ENCODE measurements at regions of chr5 and their contacts with region 1.

Region 1: DNA sequence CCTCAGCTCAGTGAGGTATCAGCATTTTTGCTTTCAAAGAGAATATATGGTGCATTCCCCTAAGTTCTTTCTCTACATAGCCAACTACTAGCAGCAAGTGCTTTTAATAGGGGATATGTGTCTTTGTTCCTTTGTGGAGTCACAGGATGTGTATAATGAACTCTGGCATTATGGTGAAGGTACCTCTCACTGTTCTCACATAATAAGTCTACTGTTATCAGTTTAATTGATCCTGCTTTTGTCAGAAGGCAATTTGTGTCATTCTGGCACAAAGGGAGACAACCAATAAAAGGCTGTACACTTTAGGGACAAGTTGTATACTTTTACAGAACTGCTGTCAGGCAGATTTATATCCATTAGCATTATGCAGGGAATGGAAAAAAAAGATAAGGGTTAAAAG is 531.4 kb upstream of the RIOK2 start:
- DNase-seq: no peak
- H3K4me3 ChIP-seq: no peak overlapping the region
- H3K27ac ChIP-seq: no peak overlapping the region
- H3K4me1 ChIP-seq: no peaks in the 10 kb centered on the region
- H3K27me3 ChIP-seq: no peaks in the 10 kb centered on the region
- CTCF ChIP-seq: no peak
- POLR2A ChIP-seq: no peak

Region 2: GRCh38 chr5:97412959-97413358 is 301.5 kb before region 1 on chr5:
- intact Hi-C with region 1: no loop called
- DNase-seq: no peak
- H3K4me3 ChIP-seq: no peak overlapping the region
- H3K27ac ChIP-seq: no peak overlapping the region
- H3K4me1 ChIP-seq: no peaks in the 10 kb centered on the region
- H3K27me3 ChIP-seq: no peaks in the 10 kb centered on the region
- CTCF ChIP-seq: no peak
- POLR2A ChIP-seq: no peak

Region 3: DNA sequence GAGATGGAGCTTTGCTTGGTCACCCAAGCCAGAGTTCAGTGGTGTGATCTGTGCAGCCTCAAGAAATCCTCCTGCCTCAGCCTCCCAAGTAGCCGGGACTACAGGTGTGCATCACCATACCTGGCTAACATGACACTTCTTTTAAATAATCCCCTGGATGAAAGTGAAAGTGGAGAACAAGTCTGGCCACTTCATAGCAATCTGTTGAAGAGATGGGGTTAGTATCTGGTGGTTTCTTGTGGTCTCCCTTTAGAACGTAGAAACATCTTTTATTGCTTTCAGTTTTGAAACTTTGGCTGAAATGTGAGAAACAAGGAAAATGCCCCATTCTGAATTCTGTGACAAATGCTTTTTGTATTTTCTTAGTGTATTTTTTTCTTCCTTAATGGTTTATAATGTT is 78.9 kb before region 1 on chr5:
- intact Hi-C with region 1: no loop called
- DNase-seq: no peak
- H3K4me3 ChIP-seq: no peak overlapping the region
- H3K27ac ChIP-seq: no peak overlapping the region
- H3K4me1 ChIP-seq: no peaks in the 10 kb centered on the region
- H3K27me3 ChIP-seq: no peaks in the 10 kb centered on the region
- CTCF ChIP-seq: no peak
- POLR2A ChIP-seq: no peak

Region 4: DNA sequence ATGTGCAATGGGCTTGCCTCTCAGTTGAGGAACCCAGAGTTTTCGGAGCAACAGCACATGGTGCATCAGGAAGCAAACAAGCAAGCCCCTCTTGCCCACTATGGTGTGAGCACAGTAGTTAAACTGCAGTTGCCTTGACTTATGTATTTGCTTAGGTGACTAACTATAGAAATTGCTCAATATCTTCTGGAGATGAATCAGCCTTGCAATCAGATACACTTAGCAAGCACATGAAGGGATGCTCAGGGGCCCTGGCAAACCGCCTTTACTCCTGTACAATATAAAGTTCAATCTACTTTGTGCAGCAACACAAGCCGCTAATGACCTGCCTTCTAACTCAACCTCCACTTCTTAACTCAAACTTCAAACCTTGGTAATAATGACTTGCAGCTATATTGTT is 50.3 kb after region 1 on chr5:
- intact Hi-C with region 1: loop called in 1 of 2 experiments (anchors 2 kb)
- DNase-seq: no peak
- H3K4me3 ChIP-seq: no peak overlapping the region
- H3K27ac ChIP-seq: no peak overlapping the region
- H3K4me1 ChIP-seq: no peaks in the 10 kb centered on the region
- H3K27me3 ChIP-seq: no peaks in the 10 kb centered on the region
- CTCF ChIP-seq: no peak
- POLR2A ChIP-seq: no peak